ENCODE measurements at regions of chr11 and their contacts with region 1.

Region 1: GRCh38 chr11:66592457-66593302 is at the starts of genes CCDC87 and CCS:
- DNase-seq: peak; percentile 99
- H3K4me3 Mint-ChIP-seq: peak within 1 kb of the TSS; percentile 100
- H3K27ac Mint-ChIP-seq: peak within 1 kb of the TSS; percentile 90
- H3K4me1 Mint-ChIP-seq: peaks cover 30% of the 10 kb centered on the region
- H3K27me3 Mint-ChIP-seq: no peaks in the 10 kb centered on the region
- total RNA-seq, gene CCDC87: 0.12 to 0.24 TPM
- total RNA-seq, gene CCS: 24.2 to 26.9 TPM

Region 2: DNA sequence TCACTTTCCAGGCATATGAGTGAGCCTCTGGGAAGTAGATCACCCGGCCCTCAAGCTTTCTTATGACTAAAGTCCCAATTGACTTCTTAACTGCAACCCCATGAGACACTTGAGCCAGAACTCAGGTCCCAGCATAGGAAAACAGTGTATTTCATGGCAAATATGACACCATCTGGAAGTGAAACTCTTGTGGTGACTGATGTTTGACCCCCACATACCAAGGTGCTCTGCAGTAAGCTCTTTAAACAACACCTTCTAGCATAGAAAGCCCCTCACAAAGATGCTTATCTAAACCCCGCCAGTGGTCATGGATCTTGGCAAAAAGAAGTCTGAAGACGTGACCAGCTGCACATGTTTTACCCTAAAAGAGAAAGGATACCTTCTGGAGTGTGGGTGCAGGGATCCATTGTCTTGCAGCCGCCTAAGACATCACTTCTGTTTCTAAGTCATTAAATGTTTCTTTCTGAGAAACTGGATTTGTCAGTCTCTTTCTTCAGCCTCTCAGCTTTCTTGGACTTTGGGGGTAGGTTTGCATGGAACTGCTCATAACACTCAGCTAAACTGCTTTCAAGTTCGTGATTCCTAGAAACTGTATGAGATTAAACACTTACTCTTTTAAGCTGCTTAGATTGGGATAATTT is 133.4 kb before region 1 on chr11:
- CTCF ChIA-PET with region 1: no interaction called
- POLR2A ChIA-PET with region 1: no interaction called
- intact Hi-C with region 1: no loop called
- DNase-seq: no peak
- H3K4me3 Mint-ChIP-seq: no peak overlapping the region
- H3K27ac Mint-ChIP-seq: peak overlapping the region; percentile 4
- H3K4me1 Mint-ChIP-seq: peaks cover 30% of the 10 kb centered on the region
- H3K27me3 Mint-ChIP-seq: no peaks in the 10 kb centered on the region

Region 3: GRCh38 chr11:66545701-66546367 is 46.8 kb before region 1 on chr11 and contains the start of gene ZDHHC24:
- CTCF ChIA-PET with region 1: interaction called, 8 read pairs
- POLR2A ChIA-PET with region 1: interaction called, 5 read pairs
- intact Hi-C with region 1: loop called (anchors 2 kb)
- DNase-seq: peak; percentile 96
- H3K4me3 Mint-ChIP-seq: peak within 1 kb of the TSS; percentile 80
- H3K27ac Mint-ChIP-seq: peak within 1 kb of the TSS; percentile 74
- H3K4me1 Mint-ChIP-seq: peaks cover 14% of the 10 kb centered on the region
- H3K27me3 Mint-ChIP-seq: no peaks in the 10 kb centered on the region
- total RNA-seq, gene ZDHHC24: 13.5 to 14.9 TPM

Region 4: GRCh38 chr11:66579017-66579606 is 13.6 kb before region 1 on chr11:
- CTCF ChIA-PET with region 1: interaction called, 46 read pairs
- POLR2A ChIA-PET with region 1: no interaction called
- intact Hi-C with region 1: no loop called
- DNase-seq: peak; percentile 90
- H3K4me3 Mint-ChIP-seq: no peak overlapping the region
- H3K27ac Mint-ChIP-seq: peak overlapping the region; percentile 40
- H3K4me1 Mint-ChIP-seq: peaks cover 19% of the 10 kb centered on the region
- H3K27me3 Mint-ChIP-seq: no peaks in the 10 kb centered on the region

Region 5: GRCh38 chr11:66616379-66617154 is 23.9 kb after region 1 on chr11 and contains the start of gene RBM14:
- CTCF ChIA-PET with region 1: interaction called, 10 read pairs
- POLR2A ChIA-PET with region 1: interaction called, 18 read pairs
- intact Hi-C with region 1: loop called (anchors 1 kb)
- DNase-seq: peak; percentile 99
- H3K4me3 Mint-ChIP-seq: peak within 1 kb of the TSS; percentile 91
- H3K27ac Mint-ChIP-seq: peak within 1 kb of the TSS; percentile 94
- H3K4me1 Mint-ChIP-seq: peaks cover 36% of the 10 kb centered on the region
- H3K27me3 Mint-ChIP-seq: no peaks in the 10 kb centered on the region
- total RNA-seq, gene RBM14: 114 to 121 TPM

Region 6: DNA sequence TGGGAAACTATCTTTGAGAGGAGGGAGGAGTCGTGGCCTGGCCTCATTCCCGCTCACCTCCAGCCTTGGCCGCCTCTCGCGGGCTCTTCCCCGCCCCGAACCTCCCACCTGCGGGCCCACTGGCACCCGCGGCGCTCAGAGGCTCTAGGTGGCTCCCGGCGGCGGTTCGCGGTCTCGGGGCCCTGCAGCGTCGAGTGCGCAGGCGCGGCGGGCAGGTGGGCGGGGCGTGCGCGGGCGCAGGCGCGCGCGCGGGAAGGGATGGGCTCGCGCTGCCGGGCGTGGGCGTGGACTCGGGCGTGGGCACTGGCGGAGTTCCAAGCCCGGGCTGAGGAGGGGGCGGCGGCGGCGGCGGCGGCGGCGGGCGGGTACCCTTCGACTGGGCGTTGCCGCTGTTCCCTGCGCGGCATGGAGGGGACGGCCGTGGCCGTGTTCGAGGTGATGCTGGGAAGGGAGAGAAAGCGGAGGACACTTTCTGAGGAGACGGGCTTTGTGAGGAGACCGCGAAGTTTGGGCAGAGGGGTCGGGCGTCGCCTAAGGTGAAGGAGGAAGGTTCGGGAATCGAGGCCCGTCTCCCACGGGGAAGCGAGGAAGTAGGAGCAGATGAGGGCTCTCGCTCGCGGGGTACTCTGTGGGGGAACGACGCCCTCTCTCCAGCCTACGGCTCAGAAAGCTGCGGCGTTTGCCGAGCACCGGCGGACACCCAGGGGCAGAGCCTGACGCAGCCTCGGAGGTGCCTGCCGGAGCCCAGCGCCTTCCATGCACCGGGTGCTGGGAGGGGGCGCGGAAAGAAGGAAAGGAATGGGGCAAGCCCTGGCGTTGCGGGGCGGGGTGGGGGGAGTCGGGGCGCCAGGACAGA is 152.0 kb after region 1 on chr11:
- CTCF ChIA-PET with region 1: no interaction called
- POLR2A ChIA-PET with region 1: no interaction called
- intact Hi-C with region 1: loop called (anchors 1 kb)
- DNase-seq: peak; percentile 92
- H3K4me3 Mint-ChIP-seq: peak overlapping the region; percentile 92
- H3K27ac Mint-ChIP-seq: peak overlapping the region; percentile 78
- H3K4me1 Mint-ChIP-seq: peaks cover 9% of the 10 kb centered on the region
- H3K27me3 Mint-ChIP-seq: no peaks in the 10 kb centered on the region